PC-9 (cell line): ENCODE measurements at regions of chr16 and their contacts with region 1.

Region 1: DNA sequence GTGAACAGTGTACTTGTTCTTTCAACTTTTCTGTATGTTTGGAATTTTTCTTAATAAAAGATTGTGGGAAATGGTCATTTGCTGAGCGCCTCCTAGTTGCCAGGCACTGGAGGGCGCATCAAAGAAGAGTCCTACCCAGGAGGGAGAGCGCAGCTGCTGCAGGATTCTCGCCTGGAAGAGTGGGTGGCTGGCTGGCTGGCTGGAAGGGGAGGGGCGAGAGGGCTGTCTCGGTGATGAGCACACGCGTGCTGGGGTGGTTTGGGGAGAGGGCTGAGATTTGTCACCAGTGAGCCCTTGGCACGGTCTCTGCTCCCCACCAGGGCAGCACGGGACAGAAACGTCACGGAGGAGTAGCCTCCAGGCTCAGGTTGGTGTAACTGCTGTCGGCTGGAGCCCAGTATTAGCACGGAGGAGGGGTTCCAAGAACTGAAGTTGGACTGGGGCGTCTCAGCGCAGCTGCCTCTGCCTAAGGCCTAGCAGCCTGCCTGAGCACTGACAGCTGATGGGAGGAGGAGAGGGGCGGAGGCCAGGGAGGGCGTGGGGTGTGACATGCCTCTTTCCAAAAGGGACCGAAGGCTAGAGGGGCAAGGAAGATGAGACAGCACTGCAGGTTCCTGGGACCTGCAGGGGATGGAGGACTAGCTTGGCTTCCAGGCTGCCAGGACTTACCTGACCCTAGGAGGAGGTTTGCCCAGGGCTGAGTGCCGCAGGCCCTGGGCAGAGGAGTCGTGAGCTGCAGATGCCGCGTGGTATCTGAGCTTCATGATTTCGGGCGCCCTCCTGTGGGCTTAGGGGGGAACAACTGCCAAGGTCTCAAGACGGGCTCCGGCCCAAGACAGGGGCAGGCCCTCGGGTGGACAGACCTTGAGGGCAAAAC is 5.7 kb downstream of the LDHD start:
- DNase-seq: peak; percentile 75 to 84
- H3K4me3 ChIP-seq: no peak overlapping the region
- H3K27ac ChIP-seq: no peak overlapping the region
- H3K4me1 ChIP-seq: peaks cover 40% of the 10 kb centered on the region
- H3K27me3 ChIP-seq: no peaks in the 10 kb centered on the region
- CTCF ChIP-seq: peak; percentile 89

Region 2: DNA sequence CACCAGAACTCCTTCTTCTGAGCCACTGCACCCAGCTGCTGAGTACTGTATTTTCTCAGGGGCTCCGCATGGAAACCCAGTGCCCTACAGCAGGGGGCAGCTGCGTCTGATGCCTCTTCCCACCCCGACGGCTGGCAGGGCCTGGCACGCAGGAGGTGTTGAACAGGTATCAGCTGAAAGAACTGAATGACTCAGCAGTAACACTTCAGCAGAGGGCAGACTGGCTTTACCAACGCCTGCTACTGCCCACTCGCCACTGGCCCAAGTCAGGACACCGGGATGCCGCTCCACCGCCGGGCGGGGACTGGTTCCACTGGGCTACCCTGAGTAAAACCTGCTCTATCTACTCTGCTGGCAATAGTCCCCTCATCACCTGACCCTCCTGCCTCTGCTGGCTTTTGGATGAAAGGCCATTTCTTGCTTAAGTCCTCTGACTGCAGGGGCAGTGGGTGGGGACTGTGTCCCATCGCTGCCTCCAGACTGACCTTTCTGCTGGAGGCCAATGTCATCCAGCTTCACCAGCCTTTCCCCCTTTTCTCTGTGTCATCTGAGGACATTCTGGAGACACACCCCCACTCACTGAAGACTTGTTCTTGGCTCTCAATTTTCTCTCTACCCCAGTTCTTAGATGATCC is 235.8 kb before region 1 on chr16:
- CTCF ChIA-PET with region 1: no interaction called
- POLR2A ChIA-PET with region 1: no interaction called
- intact Hi-C with region 1: loop called (anchors 5 kb)
- DNase-seq: peak in 1 of 2 experiments; percentile 76
- H3K4me3 ChIP-seq: no peak overlapping the region
- H3K27ac ChIP-seq: no peak overlapping the region
- H3K4me1 ChIP-seq: no peaks in the 10 kb centered on the region
- H3K27me3 ChIP-seq: no peaks in the 10 kb centered on the region
- CTCF ChIP-seq: no peak

Region 3: GRCh38 chr16:74984535-74985296 is 126.2 kb before region 1 on chr16 and contains the start of gene WDR59:
- CTCF ChIA-PET with region 1: interaction called, 16 read pairs
- POLR2A ChIA-PET with region 1: interaction called, 14 read pairs
- intact Hi-C with region 1: loop called (anchors 1 kb)
- DNase-seq: peak; percentile 99
- H3K4me3 ChIP-seq: peak within 1 kb of the TSS; percentile 89
- H3K27ac ChIP-seq: peak within 1 kb of the TSS; percentile 59
- H3K4me1 ChIP-seq: 0 out of 2 replicates have a peak, but pooled peaks cover 8% of the 10 kb centered on the region
- H3K27me3 ChIP-seq: no peaks in the 10 kb centered on the region
- CTCF ChIP-seq: no peak
- total RNA-seq, gene WDR59: 97.0 and 97.1 TPM in 2 replicates

Region 4: GRCh38 chr16:75029557-75030253 is 81.2 kb before region 1 on chr16:
- CTCF ChIA-PET with region 1: no interaction called
- POLR2A ChIA-PET with region 1: interaction called, 4 read pairs
- intact Hi-C with region 1: loop called (anchors 1 kb)
- DNase-seq: peak; percentile 65 to 91
- H3K4me3 ChIP-seq: no peak overlapping the region
- H3K27ac ChIP-seq: peak overlapping the region; percentile 71
- H3K4me1 ChIP-seq: peaks cover 66% of the 10 kb centered on the region
- H3K27me3 ChIP-seq: no peaks in the 10 kb centered on the region
- CTCF ChIP-seq: no peak

Region 5: GRCh38 chr16:75044800-75045430 is 66.0 kb before region 1 on chr16:
- CTCF ChIA-PET with region 1: no interaction called
- POLR2A ChIA-PET with region 1: no interaction called
- intact Hi-C with region 1: loop called (anchors 1 kb)
- DNase-seq: peak; percentile 67 to 96
- H3K4me3 ChIP-seq: no peak overlapping the region
- H3K27ac ChIP-seq: peak overlapping the region; percentile 81
- H3K4me1 ChIP-seq: peaks cover 69% of the 10 kb centered on the region
- H3K27me3 ChIP-seq: no peaks in the 10 kb centered on the region
- CTCF ChIP-seq: no peak

Region 6: DNA sequence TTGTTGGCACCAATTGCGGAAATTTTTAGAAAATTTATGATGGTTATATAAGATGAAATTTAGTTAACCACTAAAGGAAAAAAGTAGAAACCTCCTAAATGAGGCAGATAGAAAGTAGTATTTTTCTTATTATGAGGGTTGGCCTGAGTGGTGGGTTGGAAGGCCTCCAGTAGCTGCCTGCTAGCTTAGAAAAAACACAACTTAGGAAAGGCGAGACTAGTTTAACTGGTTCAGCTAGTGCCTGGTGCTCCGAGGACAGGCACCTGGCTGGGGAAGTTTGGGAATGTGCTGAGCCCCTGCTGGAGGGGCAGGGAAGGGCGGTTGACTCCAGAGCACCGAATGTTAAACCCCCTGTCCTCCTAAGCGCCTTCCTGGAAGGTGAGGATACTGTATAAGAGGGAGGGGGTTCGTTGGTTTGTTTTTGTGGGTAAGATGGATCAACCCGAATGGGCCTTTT is 14.2 kb before region 1 on chr16:
- CTCF ChIA-PET with region 1: no interaction called
- POLR2A ChIA-PET with region 1: no interaction called
- intact Hi-C with region 1: loop called (anchors 1 kb)
- DNase-seq: peak; percentile 77 to 83
- H3K4me3 ChIP-seq: peak overlapping the region; percentile 26; the same call in 1 of the 2 replicates
- H3K27ac ChIP-seq: peak overlapping the region; percentile 55
- H3K4me1 ChIP-seq: peaks cover 42% of the 10 kb centered on the region
- H3K27me3 ChIP-seq: no peaks in the 10 kb centered on the region
- CTCF ChIP-seq: peak; percentile 80